PC-9 (cell line): ENCODE measurements at regions of chr16 and their contacts with region 1.

Region 1: GRCh38 chr16:31382485-31383161 is 10.5 kb upstream of the ITGAD start:
- DNase-seq: peak in 1 of 2 experiments; percentile 77
- H3K4me3 ChIP-seq: no peak overlapping the region
- H3K27ac ChIP-seq: no peak overlapping the region
- H3K4me1 ChIP-seq: peaks cover 29% of the 10 kb centered on the region
- H3K27me3 ChIP-seq: no peaks in the 10 kb centered on the region
- CTCF ChIP-seq: peak; percentile 86

Region 2: GRCh38 chr16:31094424-31095120 is 288.1 kb before region 1 on chr16 and contains the start of gene VKORC1:
- CTCF ChIA-PET with region 1: no interaction called
- POLR2A ChIA-PET with region 1: no interaction called
- intact Hi-C with region 1: loop called (anchors 10 kb)
- DNase-seq: peak; percentile 97 to 99
- H3K4me3 ChIP-seq: peak within 1 kb of the TSS; percentile 71
- H3K27ac ChIP-seq: peak within 1 kb of the TSS; percentile 35
- H3K4me1 ChIP-seq: 0 out of 2 replicates have a peak, but pooled peaks cover 3% of the 10 kb centered on the region
- H3K27me3 ChIP-seq: no peaks in the 10 kb centered on the region
- CTCF ChIP-seq: no peak
- total RNA-seq, gene VKORC1: 46.0 and 59.9 TPM in 2 replicates

Region 3: DNA sequence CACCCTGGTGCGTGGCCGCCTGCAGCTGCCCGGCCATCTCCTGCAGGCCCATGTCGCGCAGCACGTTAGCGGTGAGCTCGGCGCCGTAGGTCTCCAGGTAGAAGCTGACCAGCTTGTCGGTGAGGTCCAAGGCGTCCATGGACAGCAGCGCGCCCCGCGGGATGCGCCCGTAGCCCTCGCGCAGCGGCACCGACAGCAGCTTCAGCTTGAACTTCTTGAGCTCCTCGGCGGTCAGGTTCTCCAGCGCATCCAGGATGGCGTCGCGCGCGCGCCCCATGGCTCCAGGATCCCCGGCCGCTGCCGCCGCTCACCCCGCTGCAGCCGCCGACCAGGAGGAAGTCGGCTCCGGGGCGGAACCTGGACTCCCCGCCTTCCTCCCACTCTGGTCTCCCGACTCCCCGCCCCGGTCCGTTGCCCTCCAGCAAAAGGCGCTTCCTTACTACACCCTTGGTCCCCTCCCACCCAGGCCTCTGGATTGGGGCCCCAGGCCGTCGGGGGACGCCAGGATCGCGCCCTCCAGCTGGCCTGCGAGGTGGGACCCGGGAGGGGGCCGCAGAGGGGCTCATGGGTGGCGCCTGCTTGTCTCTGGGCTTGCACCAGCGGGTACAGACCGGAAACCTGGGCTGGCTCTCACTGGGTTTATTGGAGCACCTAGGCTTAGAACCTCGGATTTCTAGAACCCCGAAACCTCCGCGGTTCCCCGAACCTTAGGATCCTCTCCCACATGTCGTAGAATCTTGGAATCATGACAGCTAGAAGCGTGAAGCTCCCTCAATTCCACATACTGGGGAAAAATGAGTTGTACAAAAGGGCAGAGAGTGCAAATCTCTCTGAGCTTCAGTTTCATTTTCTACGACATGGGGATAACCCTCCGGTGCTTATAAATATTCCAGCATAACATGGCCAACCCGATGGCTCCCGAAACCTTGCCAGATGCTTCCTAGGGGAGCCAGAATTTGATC is 179.9 kb before region 1 on chr16 and contains the start of gene PYCARD:
- CTCF ChIA-PET with region 1: interaction called, 3 read pairs
- POLR2A ChIA-PET with region 1: no interaction called
- intact Hi-C with region 1: loop called (anchors 5 kb)
- DNase-seq: peak in 1 of 2 experiments; percentile 65
- H3K4me3 ChIP-seq: peak within 1 kb of the TSS; percentile 47
- H3K27ac ChIP-seq: no peak within 1 kb of the TSS
- H3K4me1 ChIP-seq: peaks cover 19% of the 10 kb centered on the region
- H3K27me3 ChIP-seq: no peaks in the 10 kb centered on the region
- CTCF ChIP-seq: no peak
- total RNA-seq, gene PYCARD: 72.9 and 107 TPM in 2 replicates

Region 4: DNA sequence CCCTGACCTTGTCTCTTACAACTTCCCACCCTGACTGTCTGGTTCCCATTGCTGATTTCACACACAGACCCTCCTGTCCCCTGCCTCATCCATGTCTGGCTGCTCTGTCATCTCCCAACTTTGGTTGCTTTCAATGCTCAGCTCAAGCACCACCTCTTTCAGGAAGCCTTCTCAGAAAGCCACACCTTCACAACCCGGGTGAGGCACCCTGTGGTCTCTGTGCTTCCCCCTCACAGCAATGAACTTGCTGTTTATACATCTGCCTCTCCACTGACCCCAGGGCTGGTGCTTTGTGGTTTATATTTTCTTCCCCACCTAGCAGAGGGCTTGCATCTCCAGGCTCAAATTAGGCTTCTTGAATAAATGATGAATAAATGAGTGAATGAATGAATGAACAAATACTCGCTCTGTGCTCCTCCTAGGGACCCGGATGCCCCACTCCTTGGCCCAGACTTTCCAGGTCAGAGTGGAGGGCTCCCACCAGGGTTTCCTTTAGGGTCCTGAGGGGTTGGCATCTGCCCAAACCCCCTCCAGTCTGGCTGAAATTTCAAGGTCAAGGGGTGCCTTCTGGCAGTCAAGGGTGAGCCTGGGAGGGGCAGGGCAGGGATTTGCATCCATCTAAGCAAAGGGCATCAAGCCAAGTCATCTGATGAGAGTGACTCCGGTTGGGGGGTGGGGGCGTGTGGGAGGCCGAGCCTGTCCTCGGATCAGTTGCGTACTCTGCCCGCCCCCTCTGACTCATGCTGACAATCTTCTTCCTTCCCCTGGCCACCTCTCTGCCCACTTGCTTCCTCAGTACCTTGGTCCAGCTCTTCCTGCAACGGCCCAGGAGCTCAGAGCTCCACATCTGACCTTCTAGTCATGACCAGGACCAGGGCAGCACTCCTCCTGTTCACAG is 28.0 kb before region 1 on chr16 and contains the start of gene ITGAX:
- CTCF ChIA-PET with region 1: no interaction called
- POLR2A ChIA-PET with region 1: no interaction called
- intact Hi-C with region 1: loop called (anchors 1 kb)
- DNase-seq: peak in 1 of 2 experiments; percentile 52
- H3K4me3 ChIP-seq: no peak within 1 kb of the TSS
- H3K27ac ChIP-seq: no peak within 1 kb of the TSS
- H3K4me1 ChIP-seq: peaks cover 8% of the 10 kb centered on the region; the same call in 1 of the 2 replicates
- H3K27me3 ChIP-seq: peaks cover 9% of the 10 kb centered on the region
- CTCF ChIP-seq: no peak
- total RNA-seq, gene ITGAX: 1.1 and 1.2 TPM in 2 replicates

Region 5: DNA sequence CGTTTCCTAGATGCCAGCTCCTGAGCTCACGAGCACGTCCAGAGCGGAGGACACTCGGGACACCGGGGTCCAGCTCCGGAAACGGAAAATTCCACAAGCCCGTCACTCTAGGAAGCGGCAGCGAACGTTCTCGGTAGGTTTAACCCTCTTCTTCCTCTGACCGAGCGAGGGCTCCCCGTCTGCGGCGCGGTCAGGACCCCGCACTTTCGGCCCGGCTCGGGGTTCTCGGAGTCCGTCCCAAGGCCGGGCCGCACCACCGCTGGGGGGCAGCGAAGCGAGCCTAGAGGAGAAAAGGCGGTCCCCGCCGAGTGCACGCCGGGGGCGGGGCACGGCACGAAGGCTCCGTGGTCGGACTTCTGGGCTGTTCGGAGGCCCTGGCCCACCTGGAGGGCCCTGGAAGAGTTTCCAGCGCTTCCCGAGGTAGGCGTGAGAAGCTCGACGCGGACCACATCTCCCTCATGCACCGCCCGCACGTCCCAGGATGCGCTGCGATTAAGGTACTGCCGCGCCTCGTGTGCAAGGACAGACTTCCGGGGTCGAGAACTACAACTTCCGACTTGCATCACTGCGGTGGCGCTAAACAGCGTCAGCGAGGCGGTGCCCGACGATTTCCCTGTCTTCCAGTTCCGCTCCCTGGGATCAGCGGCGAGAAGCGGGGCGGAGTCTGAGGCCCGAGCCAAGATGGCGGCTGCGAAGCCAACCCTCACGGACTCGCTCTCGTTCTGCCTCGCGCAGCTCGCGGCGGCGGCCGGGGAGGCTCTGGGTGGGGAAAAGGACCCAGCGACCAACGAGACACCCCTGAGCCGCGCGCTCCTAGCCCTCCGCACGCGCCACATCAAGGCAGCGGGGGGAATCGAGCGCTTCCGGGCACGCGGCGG is 76.5 kb after region 1 on chr16 and contains the start of gene ARMC5:
- CTCF ChIA-PET with region 1: interaction called, 3 read pairs
- POLR2A ChIA-PET with region 1: interaction called, 23 read pairs
- intact Hi-C with region 1: loop called (anchors 5 kb)
- DNase-seq: peak; percentile 96 to 99
- H3K4me3 ChIP-seq: peak within 1 kb of the TSS; percentile 80
- H3K27ac ChIP-seq: peak within 1 kb of the TSS; percentile 95
- H3K4me1 ChIP-seq: peaks cover 41% of the 10 kb centered on the region
- H3K27me3 ChIP-seq: no peaks in the 10 kb centered on the region
- CTCF ChIP-seq: peak; percentile 66
- total RNA-seq, gene ARMC5: 18.6 and 21.4 TPM in 2 replicates